PC-9 (cell line): ENCODE measurements at regions of chr9 and their contacts with region 1.

Region 1: DNA sequence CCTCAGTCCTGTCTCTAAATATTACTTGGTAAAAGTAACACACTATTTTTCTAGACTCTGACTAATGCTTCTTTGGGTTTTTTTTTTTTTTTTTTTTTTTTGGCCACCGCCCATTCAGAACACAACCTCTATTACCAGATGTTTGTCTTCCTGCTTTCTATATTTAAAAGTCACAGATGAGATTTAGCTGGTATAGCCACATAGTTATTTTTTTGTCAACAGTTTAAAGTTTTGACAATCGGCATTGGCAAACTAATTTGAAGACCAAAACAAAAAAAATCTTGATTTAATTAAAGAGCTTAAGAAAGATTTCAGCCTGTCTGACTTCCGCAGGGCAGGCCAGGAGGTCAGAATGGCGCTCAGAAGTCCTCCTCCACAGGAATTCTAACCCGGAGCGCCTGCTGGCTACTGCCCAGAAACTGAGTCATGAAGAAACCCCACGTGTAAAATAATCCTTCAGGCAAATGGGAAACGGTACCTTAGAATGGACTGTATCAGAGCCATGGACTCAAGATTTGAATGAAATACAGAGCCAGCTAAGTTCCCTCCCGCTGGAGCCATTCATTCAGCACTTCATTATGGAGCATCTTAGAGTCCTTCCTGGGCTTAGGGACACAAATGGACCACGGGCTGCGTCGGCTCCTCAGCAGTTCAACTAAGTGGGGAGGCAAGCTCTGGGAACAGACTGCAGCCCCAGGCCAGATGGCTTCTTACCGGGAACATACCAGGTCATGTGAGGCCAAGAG is 55.6 kb downstream of the PTPDC1 start:
- DNase-seq: peak in 1 of 2 experiments; percentile 79
- H3K4me3 ChIP-seq: no peak overlapping the region
- H3K27ac ChIP-seq: no peak overlapping the region
- H3K4me1 ChIP-seq: no peaks in the 10 kb centered on the region
- H3K27me3 ChIP-seq: no peaks in the 10 kb centered on the region
- CTCF ChIP-seq: no peak

Region 2: GRCh38 chr9:93930070-93930469 is 209.8 kb before region 1 on chr9:
- CTCF ChIA-PET with region 1: no interaction called
- POLR2A ChIA-PET with region 1: no interaction called
- intact Hi-C with region 1: no loop called
- DNase-seq: no peak
- H3K4me3 ChIP-seq: no peak overlapping the region
- H3K27ac ChIP-seq: no peak overlapping the region
- H3K4me1 ChIP-seq: no peaks in the 10 kb centered on the region
- H3K27me3 ChIP-seq: peaks cover 97% of the 10 kb centered on the region
- CTCF ChIP-seq: no peak

Region 3: GRCh38 chr9:94166237-94166963 is 26.6 kb after region 1 on chr9:
- CTCF ChIA-PET with region 1: interaction called, 24 read pairs
- POLR2A ChIA-PET with region 1: no interaction called
- intact Hi-C with region 1: loop called (anchors 1 kb)
- DNase-seq: peak; percentile 94 to 98
- H3K4me3 ChIP-seq: peak overlapping the region; percentile 92
- H3K27ac ChIP-seq: peak overlapping the region; percentile 96
- H3K4me1 ChIP-seq: peaks cover 35% of the 10 kb centered on the region
- H3K27me3 ChIP-seq: no peaks in the 10 kb centered on the region
- CTCF ChIP-seq: no peak